Endothelial cell of umbilical vein (primary cell): ENCODE measurements at regions of chr3 and their contacts with region 1.

Region 1: GRCh38 chr3:143329567-143330211 is 210.1 kb downstream of the CHST2 start:
- DNase-seq: peak; percentile 62
- H3K4me3 ChIP-seq: no peak overlapping the region
- H3K27ac ChIP-seq: no peak overlapping the region
- H3K4me1 ChIP-seq: peaks cover 37% of the 10 kb centered on the region
- H3K27me3 ChIP-seq: no peaks in the 10 kb centered on the region
- CTCF ChIP-seq: peak in 1 of 2 donors; percentile 5
- POLR2A ChIP-seq: no peak

Region 2: GRCh38 chr3:143291836-143292447 is 37.7 kb before region 1 on chr3:
- CTCF ChIA-PET with region 1: no interaction called
- POLR2A ChIA-PET with region 1: no interaction called
- dilution Hi-C with region 1: no loop called
- intact Hi-C with region 1: no loop called
- DNase-seq: no peak
- H3K4me3 ChIP-seq: no peak overlapping the region
- H3K27ac ChIP-seq: no peak overlapping the region
- H3K4me1 ChIP-seq: no peaks in the 10 kb centered on the region
- H3K27me3 ChIP-seq: no peaks in the 10 kb centered on the region
- CTCF ChIP-seq: no peak
- POLR2A ChIP-seq: no peak

Region 3: DNA sequence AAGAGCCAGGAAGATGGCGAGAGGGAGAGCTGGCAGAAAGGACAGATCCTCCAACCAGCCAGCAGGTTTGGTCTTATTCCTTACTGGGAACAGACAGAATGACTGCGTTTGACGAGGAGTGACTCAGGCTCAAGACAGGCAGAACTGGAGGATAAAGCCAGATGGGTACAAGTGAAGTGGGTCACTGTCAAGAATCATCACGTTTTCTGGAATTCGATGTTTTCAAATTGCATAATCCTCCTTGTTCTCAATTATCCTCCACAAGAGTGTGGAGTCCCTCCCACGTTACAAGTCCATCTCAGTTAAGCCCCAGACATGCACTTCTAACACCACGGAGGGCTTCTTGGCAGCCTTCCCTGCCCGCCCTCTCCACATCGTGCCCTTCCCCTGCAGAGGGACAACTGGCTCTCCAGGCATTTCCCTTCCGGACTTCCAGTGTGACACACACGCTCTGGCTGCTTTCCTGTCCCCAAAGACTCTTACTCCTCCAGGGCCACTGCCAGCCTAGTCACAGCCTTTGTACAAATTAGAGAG is 27.0 kb before region 1 on chr3:
- CTCF ChIA-PET with region 1: interaction called, 4 read pairs
- POLR2A ChIA-PET with region 1: interaction called, 4 read pairs
- dilution Hi-C with region 1: no loop called
- intact Hi-C with region 1: loop called (anchors 1 kb)
- DNase-seq: peak; percentile 90
- H3K4me3 ChIP-seq: no peak overlapping the region
- H3K27ac ChIP-seq: peak overlapping the region; percentile 71
- H3K4me1 ChIP-seq: peaks cover 48% of the 10 kb centered on the region
- H3K27me3 ChIP-seq: no peaks in the 10 kb centered on the region
- CTCF ChIP-seq: no peak
- POLR2A ChIP-seq: peak; percentile 71

Region 4: DNA sequence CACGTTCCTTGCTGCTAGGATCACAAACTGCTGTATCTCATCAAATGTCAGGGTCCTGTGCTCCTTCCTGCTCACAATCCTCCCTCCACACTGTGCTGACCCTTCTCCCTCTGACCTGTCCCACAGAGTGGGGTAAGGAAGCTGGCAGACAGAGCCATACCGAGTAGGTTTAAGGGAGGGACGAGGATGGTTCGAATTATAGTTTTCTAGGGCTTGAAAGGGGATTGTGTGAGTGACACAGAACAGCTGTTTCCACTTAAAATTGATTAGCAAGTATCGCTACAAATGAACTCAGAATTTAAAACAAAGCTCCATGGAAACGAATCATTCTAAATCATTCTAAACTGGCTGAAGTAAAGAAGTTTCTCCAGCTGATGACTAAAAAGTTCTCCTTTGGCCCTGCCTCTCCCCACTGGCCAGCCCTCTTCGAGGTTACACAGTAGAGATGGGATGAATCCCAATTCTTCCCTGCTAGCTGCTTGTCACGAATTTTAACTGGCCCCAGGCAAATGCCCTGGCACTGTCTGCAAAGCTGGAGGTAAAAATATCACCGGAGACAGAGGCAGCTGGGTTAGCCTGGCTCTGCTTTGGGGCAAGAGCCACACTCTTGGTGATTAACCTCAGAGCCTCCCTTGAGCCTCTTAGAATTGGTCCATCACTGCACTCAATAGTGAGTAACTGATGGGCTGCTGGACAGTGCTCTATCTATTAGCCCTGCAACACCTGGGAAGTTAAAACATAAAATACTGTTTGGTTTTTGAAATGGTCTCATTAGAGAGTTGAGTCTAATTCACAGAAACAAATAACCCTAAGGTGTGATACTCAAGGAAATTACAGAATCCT is 15.2 kb before region 1 on chr3:
- CTCF ChIA-PET with region 1: interaction called, 10 read pairs
- POLR2A ChIA-PET with region 1: no interaction called
- dilution Hi-C with region 1: no loop called
- intact Hi-C with region 1: no loop called
- DNase-seq: no peak
- H3K4me3 ChIP-seq: no peak overlapping the region
- H3K27ac ChIP-seq: no peak overlapping the region
- H3K4me1 ChIP-seq: no peaks in the 10 kb centered on the region
- H3K27me3 ChIP-seq: no peaks in the 10 kb centered on the region
- CTCF ChIP-seq: no peak
- POLR2A ChIP-seq: no peak